ENCODE measurements at regions of chr22 and their contacts with region 1.

Region 1: DNA sequence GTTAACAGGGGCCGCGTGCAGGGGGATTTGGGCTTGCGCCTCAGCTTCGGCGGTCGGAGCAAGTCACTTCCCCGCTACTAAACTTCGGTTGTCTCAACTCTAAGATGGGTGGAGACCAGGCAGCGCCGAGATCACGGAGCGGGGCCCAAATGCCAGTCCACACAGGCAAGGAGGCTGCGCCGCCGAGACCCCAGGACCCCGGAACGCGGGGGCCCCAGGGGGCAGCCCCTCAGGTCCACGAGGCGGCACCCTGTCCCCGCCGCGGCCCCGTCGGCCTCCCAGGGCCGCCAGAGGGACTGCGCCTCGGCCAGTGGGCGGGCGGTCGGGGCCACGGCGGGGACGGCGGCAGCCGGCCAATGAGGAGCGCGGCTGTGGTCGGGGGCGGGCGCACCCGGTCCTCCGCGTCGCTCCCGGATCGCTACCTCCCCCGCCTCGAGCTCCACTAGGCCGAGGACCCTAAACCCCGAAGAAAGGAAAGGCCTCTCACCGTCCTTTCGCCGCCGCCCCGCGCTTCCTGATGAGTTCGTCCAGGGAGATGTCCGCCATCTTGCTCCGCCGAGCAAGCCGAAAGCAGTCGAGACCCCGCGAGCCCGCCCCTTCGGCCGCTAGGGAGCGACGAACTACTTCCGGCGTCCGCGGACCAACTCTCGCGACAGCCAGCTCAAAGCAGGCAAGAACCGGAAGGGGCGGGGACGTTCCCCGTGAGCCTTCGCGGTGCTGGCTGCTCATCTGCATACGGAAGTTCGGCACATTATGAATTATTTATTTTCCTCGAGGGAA is at the start of gene POLDIP3:
- DNase-seq: peak; percentile 98 to 99
- ATAC-seq: peak; percentile 82 to 87
- H3K4me3 ChIP-seq: peak within 1 kb of the TSS; percentile 78 to 86 (median 80)
- H3K27ac ChIP-seq: peak within 1 kb of the TSS; percentile 90 to 96 (median 94)
- H3K4me1 ChIP-seq: peaks cover 48 to 55% of the 10 kb centered on the region in 2 donors
- H3K27me3 ChIP-seq: no peaks in the 10 kb centered on the region
- CTCF ChIP-seq: peak; percentile 25 to 58 (median 42)
- POLR2A ChIP-seq: peak; percentile 36 to 86
- total RNA-seq, gene POLDIP3: 19.7 to 28.7 (median 23.0) TPM

Region 2: DNA sequence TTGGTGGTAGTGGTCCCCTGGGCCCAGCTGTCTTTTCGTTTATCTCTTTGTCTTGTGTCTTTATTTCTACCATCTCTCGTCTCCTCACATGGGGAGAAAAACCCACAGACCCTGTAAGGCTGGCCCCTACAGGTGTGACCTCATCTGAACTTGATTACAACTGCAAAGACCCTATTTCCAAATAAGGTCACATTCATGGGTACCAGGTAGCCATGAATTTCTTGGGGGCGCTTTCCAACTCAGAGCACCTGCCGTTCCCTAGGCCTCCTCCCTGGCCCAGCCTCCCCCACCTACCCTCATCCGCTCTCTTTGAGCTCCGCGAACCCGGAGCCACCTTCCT is 80.9 kb before region 1 on chr22:
- in situ Hi-C with region 1: no loop called
- intact Hi-C with region 1: loop called (anchors 10 kb)
- DNase-seq: no peak
- ATAC-seq: no peak
- H3K4me3 ChIP-seq: no peak overlapping the region
- H3K27ac ChIP-seq: no peak overlapping the region
- H3K4me1 ChIP-seq: peaks cover 3 to 6% of the 10 kb centered on the region in 2 donors
- H3K27me3 ChIP-seq: peaks cover 0 to 2% (median 0%) of the 10 kb centered on the region in 3 donors
- CTCF ChIP-seq: no peak
- POLR2A ChIP-seq: no peak

Region 3: GRCh38 chr22:42697542-42698013 is 83.1 kb after region 1 on chr22:
- in situ Hi-C with region 1: no loop called
- intact Hi-C with region 1: loop called (anchors 2 kb)
- DNase-seq: peak; percentile 90 to 98
- ATAC-seq: peak; percentile 71 to 73
- H3K4me3 ChIP-seq: no peak overlapping the region
- H3K27ac ChIP-seq: peak overlapping the region; percentile 87 to 98 (median 92)
- H3K4me1 ChIP-seq: peaks cover 57 to 62% of the 10 kb centered on the region in 2 donors
- H3K27me3 ChIP-seq: no peaks in the 10 kb centered on the region
- CTCF ChIP-seq: no peak
- POLR2A ChIP-seq: peak in 1 of 2 donors; percentile 49

Region 4: GRCh38 chr22:42994881-42995562 is 380.5 kb after region 1 on chr22:
- in situ Hi-C with region 1: no loop called
- intact Hi-C with region 1: no loop called
- DNase-seq: peak; percentile 55 to 64
- ATAC-seq: peak; percentile 79 to 89
- H3K4me3 ChIP-seq: peak overlapping the region in 2 of 4 donors; percentile 5 to 26
- H3K27ac ChIP-seq: peak overlapping the region; percentile 39 to 71 (median 55)
- H3K4me1 ChIP-seq: peaks cover 48 to 63% of the 10 kb centered on the region in 2 donors
- H3K27me3 ChIP-seq: no peaks in the 10 kb centered on the region
- CTCF ChIP-seq: no peak
- POLR2A ChIP-seq: no peak

Measured in gastrocnemius medialis (tissue), 4 donors.